ENCODE measurements at regions of chr15 and their contacts with region 1.

Region 1: DNA sequence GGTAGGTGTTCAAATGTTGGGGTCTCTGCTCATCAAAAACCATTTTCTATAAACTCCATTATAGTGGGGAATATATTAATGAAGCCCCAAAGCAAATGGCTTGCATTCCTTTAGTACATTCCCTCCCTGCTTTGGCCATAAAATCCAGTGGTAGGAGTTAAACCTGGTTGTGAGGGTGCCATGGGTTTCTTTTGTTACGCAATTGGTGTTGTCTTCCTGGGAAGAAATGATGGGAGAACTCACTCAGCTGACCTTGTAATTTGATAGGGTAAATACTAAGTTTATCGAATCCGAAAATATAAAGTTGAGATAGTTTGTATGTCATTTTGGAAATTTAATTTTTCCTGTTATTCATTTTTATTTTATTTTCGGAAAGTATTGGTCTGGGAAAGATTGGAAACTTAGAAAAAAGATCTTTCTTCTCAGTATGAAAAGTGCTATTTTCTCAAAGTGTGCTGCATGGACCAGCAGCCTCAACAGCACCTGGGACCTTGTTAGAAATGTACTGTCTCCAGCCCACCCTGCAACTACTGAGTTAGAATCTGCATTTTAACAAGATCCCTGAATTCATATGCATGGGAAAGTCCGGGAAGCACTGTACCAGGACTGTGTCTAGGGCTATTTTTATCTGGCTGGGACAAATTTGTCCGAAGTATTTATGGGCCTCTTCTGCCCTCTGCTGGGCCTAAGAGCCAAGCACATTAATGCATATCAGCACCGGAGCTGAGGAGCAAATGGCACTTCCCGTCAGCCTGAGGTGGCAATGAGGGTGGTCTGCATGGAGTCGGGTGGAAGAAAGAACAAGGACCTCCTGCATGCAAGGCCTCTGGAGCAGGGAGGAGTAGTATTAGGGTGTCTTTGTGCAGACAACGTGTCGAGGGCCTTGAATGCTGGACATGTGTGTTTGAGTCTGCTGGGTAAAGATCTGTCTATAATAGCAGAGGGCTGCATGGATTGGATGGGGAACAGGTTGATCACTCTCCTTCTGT is 54.7 kb downstream of the FAM81A start:
- DNase-seq: peak; percentile 73
- H3K4me3 ChIP-seq: no peak overlapping the region
- H3K27ac ChIP-seq: no peak overlapping the region
- H3K4me1 ChIP-seq: no peaks in the 10 kb centered on the region
- H3K27me3 ChIP-seq: no peaks in the 10 kb centered on the region
- CTCF ChIP-seq: peak; percentile 68 to 86
- POLR2A ChIP-seq: no peak

Region 2: DNA sequence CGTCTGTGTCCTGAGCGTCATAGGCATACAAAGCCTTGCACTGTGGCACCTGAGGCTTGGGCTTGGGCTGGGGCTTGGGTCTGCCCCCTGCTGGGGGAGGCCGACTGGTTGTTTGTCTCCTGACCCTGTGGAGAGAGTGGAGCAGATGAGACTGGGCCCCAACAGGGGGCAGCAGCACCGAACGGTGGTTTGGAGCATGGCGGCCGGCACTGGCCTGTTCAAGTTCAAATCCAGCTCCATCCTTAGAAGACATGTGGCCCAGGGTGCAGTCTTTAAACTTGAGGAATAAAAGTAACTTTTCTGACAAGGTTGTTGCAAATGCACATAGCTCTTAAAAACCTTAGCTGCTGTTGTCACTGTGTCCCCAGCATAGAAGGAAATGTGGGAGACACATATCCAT is 354.4 kb before region 1 on chr15:
- CTCF ChIA-PET with region 1: interaction called, 11 read pairs
- POLR2A ChIA-PET with region 1: no interaction called
- dilution Hi-C with region 1: no loop called
- intact Hi-C with region 1: loop called (anchors 2 kb)
- DNase-seq: peak; percentile 64
- H3K4me3 ChIP-seq: no peak overlapping the region
- H3K27ac ChIP-seq: no peak overlapping the region
- H3K4me1 ChIP-seq: no peaks in the 10 kb centered on the region
- H3K27me3 ChIP-seq: no peaks in the 10 kb centered on the region
- CTCF ChIP-seq: peak; percentile 86 to 91
- POLR2A ChIP-seq: no peak

Region 3: GRCh38 chr15:59160880-59161593 is 331.6 kb before region 1 on chr15:
- CTCF ChIA-PET with region 1: interaction called, 10 read pairs
- POLR2A ChIA-PET with region 1: no interaction called
- dilution Hi-C with region 1: no loop called
- intact Hi-C with region 1: loop called (anchors 1 kb)
- DNase-seq: peak; percentile 9
- H3K4me3 ChIP-seq: no peak overlapping the region
- H3K27ac ChIP-seq: no peak overlapping the region
- H3K4me1 ChIP-seq: peaks cover 9% of the 10 kb centered on the region
- H3K27me3 ChIP-seq: no peaks in the 10 kb centered on the region
- CTCF ChIP-seq: peak; percentile 42
- POLR2A ChIP-seq: no peak

Region 4: DNA sequence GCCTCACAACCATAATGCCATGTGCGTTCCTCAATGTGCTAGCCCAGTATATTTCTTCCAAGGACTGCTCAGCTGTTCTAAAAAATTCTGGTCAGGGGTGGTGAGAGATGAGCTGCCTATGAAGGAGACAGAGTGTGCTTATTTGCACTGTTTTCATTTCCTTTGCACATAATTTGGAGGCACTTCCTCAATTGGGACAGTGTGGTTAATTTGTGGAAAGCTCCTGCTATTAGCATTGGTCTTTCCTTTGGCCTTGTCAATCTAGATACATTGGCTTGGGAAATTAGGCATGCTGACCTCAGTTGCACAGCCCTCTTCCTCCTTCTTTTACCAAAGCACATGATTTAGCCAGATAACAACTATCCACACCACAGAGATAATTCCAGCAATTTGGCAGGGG is 45.3 kb before region 1 on chr15:
- CTCF ChIA-PET with region 1: no interaction called
- POLR2A ChIA-PET with region 1: no interaction called
- dilution Hi-C with region 1: no loop called
- intact Hi-C with region 1: no loop called
- DNase-seq: no peak
- H3K4me3 ChIP-seq: no peak overlapping the region
- H3K27ac ChIP-seq: no peak overlapping the region
- H3K4me1 ChIP-seq: no peaks in the 10 kb centered on the region
- H3K27me3 ChIP-seq: no peaks in the 10 kb centered on the region
- CTCF ChIP-seq: no peak
- POLR2A ChIP-seq: no peak

Measured in endothelial cell of umbilical vein (primary cell).